ENCODE measurements at regions of chr15 and their contacts with region 1.

Region 1: GRCh38 chr15:100572362-100572983 is 29.5 kb downstream of the LINS1 start:
- DNase-seq: peak; percentile 58
- ATAC-seq: no peak
- H3K4me3 ChIP-seq: no peak overlapping the region
- H3K27ac ChIP-seq: no peak overlapping the region
- H3K4me1 ChIP-seq: no peaks in the 10 kb centered on the region
- H3K27me3 ChIP-seq: no peaks in the 10 kb centered on the region
- CTCF ChIP-seq: peak; percentile 66

Region 2: GRCh38 chr15:100349696-100350433 is 222.6 kb before region 1 on chr15:
- CTCF ChIA-PET with region 1: interaction called, 9 read pairs
- POLR2A ChIA-PET with region 1: no interaction called
- intact Hi-C with region 1: loop called (anchors 1 kb)
- DNase-seq: peak; percentile 92
- ATAC-seq: peak; percentile 92
- H3K4me3 ChIP-seq: peak overlapping the region; percentile 89
- H3K27ac ChIP-seq: peak overlapping the region; percentile 58
- H3K4me1 ChIP-seq: peaks cover 35% of the 10 kb centered on the region
- H3K27me3 ChIP-seq: no peaks in the 10 kb centered on the region
- CTCF ChIP-seq: peak; percentile 66

Region 3: DNA sequence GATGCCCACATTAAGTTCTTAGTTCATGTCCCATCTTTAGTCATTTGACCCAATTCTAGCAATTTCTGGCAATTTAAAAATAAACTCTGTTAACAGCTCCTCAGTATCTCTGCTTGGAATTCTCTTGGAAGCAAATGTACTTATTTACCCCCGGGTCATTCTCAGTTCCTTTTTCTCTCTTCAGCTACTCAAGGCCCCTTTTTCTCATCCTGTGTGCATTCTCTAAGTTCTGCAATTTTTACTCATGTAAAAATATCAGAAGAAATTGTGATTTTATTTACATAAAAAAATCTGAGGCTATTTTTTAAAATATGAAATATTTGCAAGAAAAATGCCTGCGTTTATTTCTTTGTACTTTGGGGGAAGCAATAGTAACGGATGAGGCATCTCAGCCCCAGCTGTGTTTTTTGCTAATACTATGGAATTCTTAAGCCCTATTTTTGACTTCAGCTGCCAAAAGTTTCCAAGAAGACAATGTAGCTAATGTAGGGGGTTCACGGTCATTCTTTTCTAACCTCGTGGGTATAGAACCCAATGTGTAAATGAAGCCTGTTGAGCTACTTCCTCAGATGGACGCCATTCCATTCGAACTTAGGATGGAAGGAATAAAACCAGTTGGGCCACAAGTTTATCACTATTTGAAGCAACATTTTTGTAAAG is 63.7 kb before region 1 on chr15:
- CTCF ChIA-PET with region 1: no interaction called
- POLR2A ChIA-PET with region 1: no interaction called
- intact Hi-C with region 1: loop called (anchors 2 kb)
- DNase-seq: no peak
- ATAC-seq: no peak
- H3K4me3 ChIP-seq: no peak overlapping the region
- H3K27ac ChIP-seq: no peak overlapping the region
- H3K4me1 ChIP-seq: no peaks in the 10 kb centered on the region
- H3K27me3 ChIP-seq: peaks cover 93% of the 10 kb centered on the region
- CTCF ChIP-seq: no peak

Region 4: GRCh38 chr15:100602064-100602822 is 29.8 kb after region 1 on chr15 and contains the starts of genes ASB7 and LINS1:
- CTCF ChIA-PET with region 1: interaction called, 3 read pairs
- POLR2A ChIA-PET with region 1: interaction called, 12 read pairs
- intact Hi-C with region 1: no loop called
- DNase-seq: peak; percentile 100
- ATAC-seq: peak; percentile 94
- H3K4me3 ChIP-seq: peak within 1 kb of the TSS; percentile 98
- H3K27ac ChIP-seq: peak within 1 kb of the TSS; percentile 25
- H3K4me1 ChIP-seq: peaks cover 22% of the 10 kb centered on the region
- H3K27me3 ChIP-seq: no peaks in the 10 kb centered on the region
- CTCF ChIP-seq: no peak
- total RNA-seq, gene ASB7: 7.8 and 9.6 TPM in 2 replicates
- total RNA-seq, gene LINS1: 8.5 and 12.0 TPM in 2 replicates

Measured in PC-3 (cell line).